ENCODE measurements at regions of chr6 and their contacts with region 1.

Region 1: GRCh38 chr6:24855395-24856245 is 56.9 kb upstream of the ARMH2 start:
- DNase-seq: peak; percentile 80
- ATAC-seq: no peak

Region 2: DNA sequence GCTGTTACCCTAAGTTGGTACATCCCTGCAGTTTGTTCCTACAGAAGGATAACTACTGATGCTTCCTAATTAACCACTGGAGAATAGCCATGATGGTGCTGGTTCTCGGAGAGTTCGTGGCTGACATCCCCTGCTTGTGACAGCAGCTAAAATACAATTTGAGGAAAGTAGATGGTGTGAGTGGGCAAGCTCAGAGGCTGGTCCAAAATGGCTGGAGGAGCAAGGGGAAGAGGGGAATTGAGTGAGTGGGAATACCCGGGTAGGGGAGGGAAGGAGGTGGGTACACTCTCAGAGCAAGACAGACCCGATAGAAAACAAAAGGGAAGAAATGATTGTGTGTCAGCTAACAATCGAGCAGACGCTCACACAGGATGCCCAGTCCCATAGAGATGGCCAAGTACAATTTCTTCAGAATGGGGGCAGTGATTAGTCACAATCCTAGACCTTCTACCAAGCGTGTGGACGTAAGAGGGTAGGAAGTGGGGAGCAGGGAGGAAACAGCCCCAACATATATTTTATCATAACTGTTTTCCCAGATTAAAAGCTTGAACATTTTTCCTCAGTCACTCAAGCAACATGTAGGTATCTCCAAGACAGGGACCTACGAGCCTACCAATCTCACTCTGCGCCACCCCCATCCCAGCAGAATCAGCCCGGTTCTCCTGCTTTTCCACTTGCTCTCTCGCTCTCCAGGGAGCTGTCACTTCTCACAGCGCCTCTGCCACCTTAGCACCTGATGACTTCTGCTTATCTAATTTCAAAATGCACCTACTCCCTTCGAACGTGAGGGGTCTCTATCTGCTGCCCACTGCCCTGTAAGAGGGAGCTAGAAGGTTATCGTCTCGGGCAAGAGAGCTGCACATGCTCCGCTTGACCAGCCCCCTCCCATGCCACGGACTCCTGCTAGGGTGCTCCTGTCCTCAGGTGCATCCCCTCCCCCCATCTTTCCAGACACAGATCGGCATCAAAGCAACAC is 53.9 kb after region 1 on chr6:
- intact Hi-C with region 1: loop called (anchors 5 kb)
- DNase-seq: no peak
- ATAC-seq: no peak

Region 3: GRCh38 chr6:24991810-24992467 is 136.3 kb after region 1 on chr6:
- intact Hi-C with region 1: loop called (anchors 2 kb)
- DNase-seq: no peak
- ATAC-seq: peak; percentile 60

Region 4: DNA sequence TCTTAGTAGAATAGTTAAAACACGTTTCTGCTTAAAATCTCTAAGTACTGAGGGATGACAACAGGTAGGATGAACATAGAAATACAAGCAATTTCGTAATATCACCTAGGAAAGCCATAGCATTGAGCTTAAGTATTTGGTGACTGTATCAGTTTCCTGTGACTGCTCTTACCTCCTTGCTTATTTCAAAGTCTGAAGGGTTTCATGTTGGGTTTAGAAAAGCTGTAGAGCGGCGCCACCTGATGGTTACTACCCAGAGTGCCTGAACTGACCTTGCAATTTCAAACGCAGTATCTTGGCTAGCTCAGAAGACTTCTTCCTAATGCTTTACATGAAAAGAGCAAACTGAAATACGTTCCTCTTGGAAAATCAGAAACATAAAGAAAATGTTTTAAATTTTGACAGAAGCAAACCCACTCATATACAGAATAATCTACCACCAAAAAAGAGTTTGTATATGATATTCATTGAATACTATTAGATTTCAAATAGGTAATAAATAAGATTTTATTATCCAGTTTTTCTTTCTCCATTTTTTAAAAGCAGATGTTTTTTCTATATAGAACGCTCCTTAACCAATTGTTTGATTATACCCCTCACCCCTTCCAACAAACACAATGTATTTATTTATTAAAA is 162.4 kb after region 1 on chr6:
- intact Hi-C with region 1: loop called (anchors 5 kb)
- DNase-seq: peak; percentile 87
- ATAC-seq: no peak

Region 5: GRCh38 chr6:25070547-25071366 is 215.1 kb after region 1 on chr6:
- intact Hi-C with region 1: loop called (anchors 1 kb)
- DNase-seq: peak; percentile 76
- ATAC-seq: peak; percentile 68

Measured in Right ventricle myocardium inferior (tissue), 1 donor.